GM10248 (cell line): ENCODE measurements at regions of chr18 and their contacts with region 1.

Region 1: DNA sequence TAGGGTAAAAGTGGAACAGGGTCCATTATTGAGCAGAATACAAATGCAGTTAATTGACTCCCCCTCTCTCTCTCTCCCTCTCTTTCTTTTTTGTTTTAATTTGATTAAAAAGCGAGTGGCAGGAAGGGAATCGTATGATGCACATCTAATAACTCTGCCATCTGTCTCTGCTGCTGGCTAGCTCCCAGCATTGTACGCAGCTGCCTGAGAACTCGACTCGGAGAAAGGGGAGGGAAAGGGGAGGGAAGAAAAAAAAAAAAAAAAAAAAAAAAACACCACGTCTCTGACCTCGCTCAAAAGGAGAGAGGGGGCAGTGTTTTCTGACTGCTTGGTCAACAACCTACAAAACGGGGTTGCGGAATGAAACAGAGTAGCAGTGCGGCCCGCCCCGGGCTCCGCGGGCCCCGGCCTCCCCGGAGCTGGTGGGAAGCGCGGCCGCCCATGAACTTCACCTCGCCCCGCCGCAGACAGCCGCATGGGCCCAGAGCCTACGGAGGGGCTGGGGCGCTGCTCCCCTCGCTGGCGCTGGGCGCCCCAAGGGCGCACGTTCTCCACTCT is 265.7 kb downstream of the TCF4 start:
- DNase-seq: peak; percentile 78
- CTCF ChIP-seq: no peak

Region 2: GRCh38 chr18:55334875-55335274 is 12.6 kb after region 1 on chr18:
- CTCF ChIA-PET with region 1: interaction called, 20 read pairs
- POLR2A ChIA-PET with region 1: interaction called, 3 read pairs
- DNase-seq: no peak
- CTCF ChIP-seq: no peak